Activated T-helper 2 cell treated with anti-CD3 and anti-CD28 coated beads, Interferon-gamma antibody, Interleukin-2, Interleukin-4, amounts not matched to agents 10 μg/mL and 5 μg/mL and 100 μg/mL, durations not matched to agents 14 hours and 24 hours and 36 hours (primary cell): ENCODE measurements at regions of chr4 and their contacts with region 1.

Region 1: DNA sequence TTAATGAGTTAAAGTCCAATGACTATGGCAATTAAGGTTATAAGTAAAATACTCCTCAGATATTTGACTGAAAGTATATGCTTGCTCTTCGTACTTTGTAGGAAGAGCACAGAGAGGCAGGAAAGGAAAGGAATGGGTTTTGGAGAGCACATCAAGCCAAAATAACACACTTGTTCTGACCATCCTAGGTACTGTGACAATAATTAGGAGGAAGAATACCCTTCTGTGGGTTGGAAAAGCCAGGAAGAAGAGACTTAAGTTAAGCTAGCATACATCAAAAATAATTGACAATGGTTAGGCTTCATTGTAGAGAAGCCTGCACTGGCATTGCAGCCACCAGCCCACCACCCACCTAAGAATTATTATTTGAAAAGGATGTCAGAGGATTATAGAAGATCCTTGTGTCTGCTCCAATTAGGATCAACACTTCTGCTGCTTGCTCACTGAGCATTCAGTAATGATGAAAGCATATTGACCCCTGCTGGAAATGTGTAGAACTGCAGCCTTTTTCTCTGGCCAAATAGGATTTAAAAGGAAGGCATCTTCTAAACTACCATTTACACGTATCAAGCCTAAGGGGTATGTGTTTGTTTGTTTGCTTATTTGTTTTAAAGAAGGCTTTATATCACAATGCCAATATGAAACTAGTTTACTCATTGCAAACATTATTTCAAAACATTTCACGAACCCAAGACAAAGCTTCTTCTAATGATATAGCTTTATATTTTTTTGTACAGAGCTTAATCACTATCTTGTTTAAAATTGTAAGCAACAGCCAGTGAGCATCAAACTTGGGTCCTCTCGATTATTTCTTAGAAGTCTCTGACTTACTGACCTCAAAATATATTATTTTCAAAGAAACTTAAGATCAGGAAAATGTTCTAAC is 286.2 kb upstream of the TET2 start:
- DNase-seq: no peak
- H3K4me3 Mint-ChIP-seq: no peak overlapping the region
- H3K27ac Mint-ChIP-seq: no peak overlapping the region
- H3K4me1 Mint-ChIP-seq: no peaks in the 10 kb centered on the region
- H3K27me3 Mint-ChIP-seq: peaks cover 13% of the 10 kb centered on the region

Region 2: GRCh38 chr4:104064646-104065577 is 795.6 kb before region 1 on chr4:
- intact Hi-C with region 1: loop called (anchors 5 kb)
- DNase-seq: no peak
- H3K4me3 Mint-ChIP-seq: no peak overlapping the region
- H3K27ac Mint-ChIP-seq: no peak overlapping the region
- H3K4me1 Mint-ChIP-seq: no peaks in the 10 kb centered on the region
- H3K27me3 Mint-ChIP-seq: no peaks in the 10 kb centered on the region